ENCODE measurements at regions of chr5 and their contacts with region 1.

Region 1: GRCh38 chr5:77630258-77631089 is 8.0 kb downstream of the OTP start:
- DNase-seq: peak; percentile 73
- ATAC-seq: peak; percentile 75
- H3K4me3 ChIP-seq: peak overlapping the region; percentile 29 to 62 (median 49)
- H3K4me3 Mint-ChIP-seq: peak overlapping the region; percentile 87
- H3K27ac ChIP-seq: no peak overlapping the region
- H3K27ac Mint-ChIP-seq: peak overlapping the region; percentile 88
- H3K4me1 ChIP-seq: peaks cover 28 to 48% of the 10 kb centered on the region in 2 donors
- H3K4me1 Mint-ChIP-seq: peaks cover 25% of the 10 kb centered on the region
- H3K27me3 ChIP-seq: peaks cover 0 to 73% (median 64%) of the 10 kb centered on the region in 4 experiments
- H3K27me3 Mint-ChIP-seq: peaks cover 62% of the 10 kb centered on the region
- CTCF ChIP-seq: no peak

Region 2: DNA sequence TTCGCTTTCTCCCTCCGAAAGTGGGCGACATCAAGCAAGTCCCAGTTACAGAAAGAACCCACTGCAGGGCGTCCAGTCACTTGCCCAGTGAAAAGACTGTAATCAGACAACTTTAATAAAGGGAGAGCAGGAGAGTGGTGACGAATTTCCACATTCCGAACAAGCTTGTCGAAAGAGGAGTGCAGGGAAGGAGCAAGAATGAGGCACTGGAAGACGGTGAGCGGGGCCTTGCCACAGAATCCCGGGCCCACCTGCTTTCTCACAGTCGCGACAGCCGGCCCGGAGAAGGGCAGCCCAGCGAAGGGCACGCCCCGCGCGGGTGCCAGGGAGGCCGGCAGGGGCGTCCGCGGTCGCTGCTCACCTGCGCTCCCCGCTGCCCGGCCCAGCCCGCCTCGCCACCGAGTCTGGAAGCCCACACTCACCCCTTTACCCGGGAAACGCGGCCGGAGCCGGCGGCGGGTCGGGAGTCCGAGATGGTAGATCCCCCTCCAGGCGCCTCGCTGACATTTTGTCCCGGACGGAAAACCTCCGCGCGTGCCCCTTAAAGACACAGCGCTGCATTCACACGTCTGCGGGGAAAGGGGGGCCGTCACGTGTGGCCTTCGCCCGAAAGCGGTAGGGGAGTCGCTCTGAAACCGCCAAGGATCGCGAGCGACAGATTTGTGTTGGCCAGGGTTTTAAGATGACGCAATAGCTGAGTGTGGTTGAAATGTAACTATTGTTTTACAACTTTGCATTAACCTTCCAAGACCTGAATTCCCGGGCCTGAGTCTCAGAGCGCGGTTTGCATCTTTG is 543.6 kb before region 1 on chr5 and contains the start of gene ZBED3:
- CTCF ChIA-PET with region 1: no interaction called
- POLR2A ChIA-PET with region 1: no interaction called
- intact Hi-C with region 1: loop called (anchors 10 kb)
- DNase-seq: peak; percentile 67
- ATAC-seq: peak; percentile 86
- H3K4me3 ChIP-seq: peak within 1 kb of the TSS; percentile 61 to 75 (median 69)
- H3K4me3 Mint-ChIP-seq: peak within 1 kb of the TSS; percentile 98
- H3K27ac ChIP-seq: peak within 1 kb of the TSS in 1 of 2 donors; percentile 11
- H3K27ac Mint-ChIP-seq: peak within 1 kb of the TSS; percentile 79
- H3K4me1 ChIP-seq: peaks cover 11 to 16% of the 10 kb centered on the region in 2 donors
- H3K4me1 Mint-ChIP-seq: peaks cover 16% of the 10 kb centered on the region
- H3K27me3 ChIP-seq: peaks cover 0 to 2% (median 0%) of the 10 kb centered on the region in 4 experiments
- H3K27me3 Mint-ChIP-seq: peaks cover 9% of the 10 kb centered on the region
- CTCF ChIP-seq: peak; percentile 31
- total RNA-seq, gene ZBED3: 1.2 and 1.6 TPM in 2 replicates

Region 3: GRCh38 chr5:77645158-77645994 is 14.9 kb after region 1 on chr5:
- CTCF ChIA-PET with region 1: interaction called, 3 read pairs
- POLR2A ChIA-PET with region 1: interaction called, 7 read pairs
- intact Hi-C with region 1: loop called (anchors 2 kb)
- DNase-seq: peak; percentile 76
- ATAC-seq: peak; percentile 82
- H3K4me3 ChIP-seq: peak overlapping the region in 3 of 5 experiments; percentile 32 to 62 (median 51)
- H3K4me3 Mint-ChIP-seq: peak overlapping the region; percentile 82
- H3K27ac ChIP-seq: no peak overlapping the region
- H3K27ac Mint-ChIP-seq: no peak overlapping the region
- H3K4me1 ChIP-seq: peaks cover 28 to 50% of the 10 kb centered on the region in 2 donors
- H3K4me1 Mint-ChIP-seq: peaks cover 17% of the 10 kb centered on the region
- H3K27me3 ChIP-seq: peaks cover 2 to 89% (median 68%) of the 10 kb centered on the region in 4 experiments
- H3K27me3 Mint-ChIP-seq: peaks cover 88% of the 10 kb centered on the region
- CTCF ChIP-seq: peak; percentile 63

Region 4: GRCh38 chr5:77852514-77853352 is 222.3 kb after region 1 on chr5:
- CTCF ChIA-PET with region 1: no interaction called
- POLR2A ChIA-PET with region 1: no interaction called
- intact Hi-C with region 1: loop called (anchors 5 kb)
- DNase-seq: peak; percentile 83
- ATAC-seq: peak; percentile 80
- H3K4me3 ChIP-seq: peak overlapping the region; percentile 57 to 82 (median 65)
- H3K4me3 Mint-ChIP-seq: peak overlapping the region; percentile 77
- H3K27ac ChIP-seq: peak overlapping the region; percentile 21 to 32
- H3K27ac Mint-ChIP-seq: peak overlapping the region; percentile 46
- H3K4me1 ChIP-seq: peaks cover 9 to 20% of the 10 kb centered on the region in 2 donors
- H3K4me1 Mint-ChIP-seq: peaks cover 20% of the 10 kb centered on the region
- H3K27me3 ChIP-seq: peaks cover 0 to 3% (median 0%) of the 10 kb centered on the region in 4 experiments
- H3K27me3 Mint-ChIP-seq: peaks cover 9% of the 10 kb centered on the region
- CTCF ChIP-seq: no peak

Region 5: GRCh38 chr5:79514391-79515105 is 1884.1 kb after region 1 on chr5:
- CTCF ChIA-PET with region 1: no interaction called
- POLR2A ChIA-PET with region 1: no interaction called
- intact Hi-C with region 1: loop called (anchors 5 kb)
- DNase-seq: peak; percentile 98
- ATAC-seq: peak; percentile 79
- H3K4me3 ChIP-seq: peak overlapping the region; percentile 32 to 85 (median 76)
- H3K4me3 Mint-ChIP-seq: peak overlapping the region; percentile 100
- H3K27ac ChIP-seq: peak overlapping the region; percentile 89 to 94
- H3K27ac Mint-ChIP-seq: peak overlapping the region; percentile 100
- H3K4me1 ChIP-seq: peaks cover 26 to 29% of the 10 kb centered on the region in 2 donors
- H3K4me1 Mint-ChIP-seq: peaks cover 36% of the 10 kb centered on the region
- H3K27me3 ChIP-seq: peaks cover 5 to 31% (median 28%) of the 10 kb centered on the region in 4 experiments
- H3K27me3 Mint-ChIP-seq: peaks cover 29% of the 10 kb centered on the region
- CTCF ChIP-seq: no peak